Ovary (tissue), 10 donors: ENCODE measurements at regions of chr16 and their contacts with region 1.

Region 1: GRCh38 chr16:52191531-52192134 is 355.3 kb downstream of the TOX3 start:
- DNase-seq: peak; percentile 18 to 59 (median 45)
- H3K4me3 ChIP-seq: no peak overlapping the region
- H3K27ac ChIP-seq: no peak overlapping the region
- H3K4me1 ChIP-seq: no peaks in the 10 kb centered on the region
- H3K27me3 ChIP-seq: no peaks in the 10 kb centered on the region
- CTCF ChIP-seq: peak; percentile 33 to 61 (median 41)
- EP300 ChIP-seq: no peak
- POLR2A ChIP-seq: no peak

Region 2: DNA sequence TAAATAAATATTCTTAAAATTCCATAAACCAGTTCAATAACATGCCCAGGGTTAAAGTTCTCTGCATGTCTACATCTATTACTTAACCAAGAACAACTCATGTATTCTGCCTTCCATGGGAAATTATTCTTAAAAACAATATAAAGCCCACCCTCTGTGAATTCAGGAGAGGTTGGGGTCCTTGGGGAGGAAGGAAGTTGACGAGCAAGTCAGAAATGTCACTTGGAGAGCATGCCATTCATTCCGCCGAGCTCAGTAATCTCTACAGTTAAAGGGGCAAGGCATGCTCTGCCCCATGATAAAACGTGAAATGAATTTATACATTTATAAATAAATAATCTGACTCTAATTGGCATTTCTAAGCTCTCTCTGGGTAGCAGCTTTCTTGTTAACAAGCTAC is 49.8 kb before region 1 on chr16:
- intact Hi-C with region 1: no loop called
- DNase-seq: no peak
- H3K4me3 ChIP-seq: no peak overlapping the region
- H3K27ac ChIP-seq: no peak overlapping the region
- H3K4me1 ChIP-seq: no peaks in the 10 kb centered on the region
- H3K27me3 ChIP-seq: no peaks in the 10 kb centered on the region
- CTCF ChIP-seq: no peak
- EP300 ChIP-seq: no peak
- POLR2A ChIP-seq: no peak

Region 3: DNA sequence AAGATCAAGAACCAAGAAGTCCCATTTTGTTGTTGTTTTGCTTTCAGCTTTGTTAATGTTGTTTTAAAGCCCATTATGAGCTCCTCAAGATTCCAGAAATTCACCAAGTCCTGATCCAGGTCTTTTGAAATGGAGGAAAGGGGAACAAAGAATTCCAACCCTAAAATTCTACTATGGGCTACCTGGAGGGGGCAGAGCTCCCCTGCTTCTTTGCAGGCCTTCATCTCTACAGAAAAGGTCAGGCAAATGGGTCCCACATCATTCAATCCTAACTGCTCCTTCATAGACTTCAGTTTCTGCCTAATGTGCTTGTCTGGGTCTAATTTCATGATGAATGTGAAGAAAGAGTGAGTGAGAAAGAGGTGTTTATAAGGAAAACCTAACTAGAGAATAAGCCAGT is 20.2 kb before region 1 on chr16:
- intact Hi-C with region 1: no loop called
- DNase-seq: no peak
- H3K4me3 ChIP-seq: no peak overlapping the region
- H3K27ac ChIP-seq: no peak overlapping the region
- H3K4me1 ChIP-seq: no peaks in the 10 kb centered on the region
- H3K27me3 ChIP-seq: no peaks in the 10 kb centered on the region
- CTCF ChIP-seq: no peak
- EP300 ChIP-seq: no peak
- POLR2A ChIP-seq: no peak

Region 4: DNA sequence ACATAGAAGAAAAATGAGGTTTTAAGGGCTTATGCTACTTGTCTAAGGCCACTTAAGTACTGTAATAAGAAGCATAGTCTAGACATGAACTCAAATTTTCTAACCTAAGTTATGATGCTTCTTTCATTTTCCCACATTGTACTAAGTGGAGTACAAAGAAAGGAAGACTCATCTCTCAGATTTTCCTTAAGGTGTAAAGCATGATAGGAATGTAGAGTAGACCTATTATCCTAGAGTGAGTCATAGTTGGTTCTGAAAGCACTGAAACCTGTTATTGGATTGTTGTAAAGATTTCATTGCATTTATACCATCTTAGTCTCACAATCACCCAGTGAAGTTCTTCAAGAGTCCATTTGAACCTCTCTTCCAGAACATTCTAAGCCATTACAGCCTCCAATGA is 11.5 kb after region 1 on chr16:
- intact Hi-C with region 1: no loop called
- DNase-seq: no peak
- H3K4me3 ChIP-seq: no peak overlapping the region
- H3K27ac ChIP-seq: no peak overlapping the region
- H3K4me1 ChIP-seq: no peaks in the 10 kb centered on the region
- H3K27me3 ChIP-seq: no peaks in the 10 kb centered on the region
- CTCF ChIP-seq: no peak
- EP300 ChIP-seq: no peak
- POLR2A ChIP-seq: no peak

Region 5: DNA sequence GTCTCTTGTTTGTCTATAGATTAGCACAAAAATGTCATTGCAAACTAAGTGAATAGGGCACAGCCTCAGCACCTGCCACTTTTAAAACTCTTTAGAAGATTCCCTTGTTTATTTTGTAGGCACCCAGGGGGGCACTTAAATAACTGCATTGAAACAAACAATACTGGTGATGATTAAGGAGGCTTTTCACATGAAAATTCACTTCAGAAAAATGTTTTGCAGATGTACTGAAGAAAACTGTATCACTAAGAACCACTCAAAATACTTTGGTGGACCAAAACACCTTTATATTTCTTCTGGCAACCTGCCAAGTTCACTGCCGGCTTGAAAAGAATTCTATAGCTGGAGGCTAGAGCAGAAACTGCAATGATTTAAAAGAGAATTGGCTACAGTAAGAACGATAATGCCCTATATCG is 73.8 kb after region 1 on chr16:
- intact Hi-C with region 1: no loop called
- DNase-seq: no peak
- H3K4me3 ChIP-seq: no peak overlapping the region
- H3K27ac ChIP-seq: no peak overlapping the region
- H3K4me1 ChIP-seq: no peaks in the 10 kb centered on the region
- H3K27me3 ChIP-seq: no peaks in the 10 kb centered on the region
- CTCF ChIP-seq: no peak
- EP300 ChIP-seq: no peak
- POLR2A ChIP-seq: no peak

Region 6: GRCh38 chr16:52912565-52913173 is 721.0 kb after region 1 on chr16:
- intact Hi-C with region 1: loop called in 2 of 4 experiments (anchors 10 kb)
- DNase-seq: peak in 3 of 5 donors; percentile 23 to 50 (median 41)
- H3K4me3 ChIP-seq: no peak overlapping the region
- H3K27ac ChIP-seq: no peak overlapping the region
- H3K4me1 ChIP-seq: no peaks in the 10 kb centered on the region
- H3K27me3 ChIP-seq: no peaks in the 10 kb centered on the region
- CTCF ChIP-seq: peak in 1 of 3 donors; percentile 45
- EP300 ChIP-seq: no peak
- POLR2A ChIP-seq: no peak

Region 7: GRCh38 chr16:53022374-53022773 is 830.7 kb after region 1 on chr16:
- intact Hi-C with region 1: loop called in 1 of 4 experiments (anchors 10 kb)
- DNase-seq: peak in 1 of 5 donors; percentile 11
- H3K4me3 ChIP-seq: no peak overlapping the region
- H3K27ac ChIP-seq: no peak overlapping the region
- H3K4me1 ChIP-seq: no peaks in the 10 kb centered on the region
- H3K27me3 ChIP-seq: no peaks in the 10 kb centered on the region
- CTCF ChIP-seq: no peak
- EP300 ChIP-seq: no peak
- POLR2A ChIP-seq: no peak